ENCODE measurements at regions of chr12 and their contacts with region 1.

Region 1: DNA sequence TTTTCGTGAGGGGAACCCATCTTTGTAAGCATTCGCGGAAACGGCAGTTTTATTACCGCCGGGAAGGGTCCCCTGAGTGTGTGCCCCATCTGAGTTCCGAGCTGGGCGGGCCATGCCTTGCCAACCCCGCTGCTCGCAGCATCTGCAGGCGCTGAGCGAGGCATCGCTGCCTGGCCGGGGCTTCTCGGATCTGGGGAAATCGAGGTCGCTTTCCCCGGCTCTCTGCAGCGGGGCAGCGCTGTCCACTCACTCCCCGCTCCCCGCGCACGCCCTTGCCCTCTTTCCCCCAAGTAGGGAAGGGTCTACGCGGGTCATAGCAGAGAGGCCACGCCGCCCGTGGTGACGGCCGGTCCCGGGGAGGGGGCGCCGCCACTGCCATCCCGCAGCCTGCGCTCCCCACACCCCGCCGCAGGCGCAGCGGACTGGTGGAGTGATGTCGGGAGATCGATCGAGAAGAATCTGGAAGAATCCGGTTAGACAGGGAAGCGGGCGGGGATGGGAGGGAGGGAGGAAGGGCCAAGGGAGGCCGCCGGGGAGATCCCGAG is 507 bp upstream of the FKBP4 start:
- DNase-seq: no peak
- ATAC-seq: peak; percentile 47
- H3K4me3 ChIP-seq: peak overlapping the region; percentile 53 to 58
- H3K27ac ChIP-seq: peak overlapping the region; percentile 63; the same call in 1 of the 2 replicates
- H3K4me1 ChIP-seq: peaks cover 14% of the 10 kb centered on the region
- H3K27me3 ChIP-seq: no peaks in the 10 kb centered on the region
- CTCF ChIP-seq: no peak

Region 2: DNA sequence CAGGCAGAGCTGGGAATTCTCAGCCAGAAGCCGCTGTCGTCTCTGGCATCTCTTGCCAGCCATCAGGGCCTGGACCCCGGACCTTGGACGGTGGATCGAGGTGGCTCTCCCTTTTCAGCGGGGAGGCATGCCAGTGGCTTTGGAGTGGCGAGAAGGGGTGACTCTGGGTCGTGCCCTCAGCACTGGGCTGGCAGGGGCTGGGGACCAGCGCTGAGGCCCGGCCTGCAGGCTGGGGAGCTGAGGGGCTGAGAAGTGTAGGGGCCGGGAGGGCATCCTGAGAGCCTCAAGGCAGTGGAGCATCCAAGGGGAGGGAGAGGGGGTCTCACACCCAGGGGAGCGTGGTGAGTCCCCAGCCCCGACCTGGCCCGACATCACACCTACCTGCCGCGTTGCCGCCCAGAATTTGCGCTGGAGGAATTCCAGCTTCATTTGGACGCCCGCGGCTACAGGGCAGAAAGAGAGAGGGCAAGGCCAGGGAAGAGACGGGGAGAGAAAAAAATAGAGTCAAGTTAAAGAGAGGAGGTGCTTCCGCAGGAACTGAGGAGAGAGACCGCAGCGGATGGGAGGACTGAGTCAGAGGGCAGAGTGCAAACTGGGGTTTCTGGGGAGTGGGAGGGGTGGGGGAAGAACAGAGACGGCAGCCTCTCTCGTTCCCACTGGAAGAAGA is 982.8 kb before region 1 on chr12:
- CTCF ChIA-PET with region 1: no interaction called
- POLR2A ChIA-PET with region 1: interaction called, 10 read pairs
- in situ Hi-C with region 1: no loop called
- intact Hi-C with region 1: no loop called
- DNase-seq: no peak
- ATAC-seq: no peak
- H3K4me3 ChIP-seq: no peak overlapping the region
- H3K27ac ChIP-seq: no peak overlapping the region
- H3K4me1 ChIP-seq: no peaks in the 10 kb centered on the region
- H3K27me3 ChIP-seq: no peaks in the 10 kb centered on the region
- CTCF ChIP-seq: no peak

Region 3: DNA sequence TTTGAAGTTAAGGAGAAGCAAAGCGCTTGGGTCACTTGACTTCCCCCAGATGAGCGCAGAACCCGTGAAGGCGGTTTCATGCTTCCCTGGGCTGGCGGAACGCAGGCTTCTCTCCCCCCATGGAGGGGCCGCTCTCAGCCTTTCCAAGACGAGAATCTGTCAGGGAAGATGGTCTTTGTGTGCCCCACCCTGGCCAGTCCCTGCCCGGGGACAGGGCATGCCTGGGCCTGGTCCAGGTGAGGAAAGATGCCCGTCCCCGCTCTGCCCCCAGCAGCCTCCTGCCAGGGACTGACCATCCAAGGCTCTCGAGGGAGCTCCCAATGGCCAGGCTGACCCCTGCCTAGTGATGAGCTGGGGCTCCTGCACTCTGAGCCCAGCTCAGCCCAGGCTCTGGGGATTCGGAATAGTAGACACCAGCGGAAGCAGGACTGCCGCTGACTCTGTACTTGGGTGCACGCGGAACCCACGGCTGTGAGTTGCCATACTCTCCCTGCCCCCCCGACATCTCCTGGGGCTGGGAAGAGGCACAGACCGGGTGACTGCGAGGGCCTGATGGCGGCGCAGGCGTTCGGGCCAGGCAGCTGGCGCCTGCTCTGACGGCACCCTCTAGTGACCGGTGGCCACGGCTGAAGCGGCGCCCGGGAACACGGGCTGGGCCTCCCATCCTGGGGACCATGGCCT is 141.7 kb before region 1 on chr12:
- CTCF ChIA-PET with region 1: no interaction called
- POLR2A ChIA-PET with region 1: no interaction called
- in situ Hi-C with region 1: no loop called
- intact Hi-C with region 1: no loop called
- DNase-seq: no peak
- ATAC-seq: no peak
- H3K4me3 ChIP-seq: no peak overlapping the region
- H3K27ac ChIP-seq: no peak overlapping the region
- H3K4me1 ChIP-seq: no peaks in the 10 kb centered on the region
- H3K27me3 ChIP-seq: no peaks in the 10 kb centered on the region; the same call in 1 of the 2 replicates
- CTCF ChIP-seq: no peak; the same call in 1 of the 2 replicates